B cell (primary cell): ENCODE measurements at regions of chr13 and their contacts with region 1.

Region 1: DNA sequence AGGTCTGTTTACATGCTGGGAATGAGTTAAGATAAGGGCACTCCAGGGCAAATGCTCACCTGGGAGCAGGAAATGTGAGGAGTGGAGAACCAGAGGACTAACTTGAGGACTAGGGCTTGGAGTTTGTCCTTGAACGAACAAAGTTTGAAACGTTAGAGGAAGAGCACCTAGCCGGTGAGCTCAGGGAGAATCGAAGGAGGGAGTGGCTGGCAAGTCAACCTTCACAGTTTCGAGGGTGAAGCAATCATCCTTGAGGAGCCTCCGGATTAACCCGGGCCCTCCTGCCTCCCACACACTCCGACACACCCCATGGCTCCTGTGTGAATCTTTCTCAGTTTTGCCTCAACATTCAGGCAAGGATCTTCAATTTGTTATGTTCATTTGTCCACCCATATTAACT is 58.6 kb downstream of the LMO7 start:
- DNase-seq: no peak
- ATAC-seq: no peak
- H3K4me3 ChIP-seq: no peak overlapping the region
- H3K4me3 Mint-ChIP-seq: no peak overlapping the region
- H3K27ac ChIP-seq: no peak overlapping the region
- H3K27ac Mint-ChIP-seq: no peak overlapping the region
- H3K4me1 ChIP-seq: no peaks in the 10 kb centered on the region
- H3K4me1 Mint-ChIP-seq: no peaks in the 10 kb centered on the region
- H3K27me3 ChIP-seq: no peaks in the 10 kb centered on the region
- H3K27me3 Mint-ChIP-seq: no peaks in the 10 kb centered on the region
- CTCF ChIP-seq: no peak

Region 2: GRCh38 chr13:75469047-75469446 is 225.7 kb before region 1 on chr13:
- CTCF ChIA-PET with region 1: no interaction called
- POLR2A ChIA-PET with region 1: no interaction called
- intact Hi-C with region 1: no loop called
- DNase-seq: no peak
- ATAC-seq: no peak
- H3K4me3 ChIP-seq: no peak overlapping the region
- H3K4me3 Mint-ChIP-seq: no peak overlapping the region
- H3K27ac ChIP-seq: no peak overlapping the region
- H3K27ac Mint-ChIP-seq: no peak overlapping the region
- H3K4me1 ChIP-seq: no peaks in the 10 kb centered on the region
- H3K4me1 Mint-ChIP-seq: no peaks in the 10 kb centered on the region
- H3K27me3 ChIP-seq: no peaks in the 10 kb centered on the region
- H3K27me3 Mint-ChIP-seq: peaks cover 14% of the 10 kb centered on the region
- CTCF ChIP-seq: no peak

Region 3: DNA sequence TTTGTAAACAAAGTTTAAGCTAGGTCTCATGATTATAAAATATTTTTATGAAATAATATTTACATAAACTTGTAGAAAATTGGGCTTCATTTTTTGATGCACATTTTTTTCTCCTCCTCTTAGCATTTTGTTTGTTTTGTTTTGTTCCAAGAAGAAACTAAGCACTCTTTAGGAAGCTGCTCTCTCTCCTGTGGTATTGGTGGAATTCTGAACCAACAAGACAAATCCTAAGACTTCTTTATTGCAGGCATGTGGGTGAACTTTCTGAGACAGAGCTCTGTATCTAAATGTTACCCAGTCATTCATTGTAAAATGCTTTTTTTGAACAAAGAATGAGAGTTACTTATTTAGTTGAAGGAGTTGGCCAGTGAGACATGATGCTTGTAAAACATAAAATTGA is 19.3 kb before region 1 on chr13:
- CTCF ChIA-PET with region 1: interaction called, 16 read pairs
- POLR2A ChIA-PET with region 1: no interaction called
- intact Hi-C with region 1: no loop called
- DNase-seq: no peak
- ATAC-seq: no peak
- H3K4me3 ChIP-seq: no peak overlapping the region
- H3K4me3 Mint-ChIP-seq: no peak overlapping the region
- H3K27ac ChIP-seq: no peak overlapping the region
- H3K27ac Mint-ChIP-seq: no peak overlapping the region
- H3K4me1 ChIP-seq: no peaks in the 10 kb centered on the region
- H3K4me1 Mint-ChIP-seq: no peaks in the 10 kb centered on the region
- H3K27me3 ChIP-seq: no peaks in the 10 kb centered on the region
- H3K27me3 Mint-ChIP-seq: no peaks in the 10 kb centered on the region
- CTCF ChIP-seq: no peak

Region 4: DNA sequence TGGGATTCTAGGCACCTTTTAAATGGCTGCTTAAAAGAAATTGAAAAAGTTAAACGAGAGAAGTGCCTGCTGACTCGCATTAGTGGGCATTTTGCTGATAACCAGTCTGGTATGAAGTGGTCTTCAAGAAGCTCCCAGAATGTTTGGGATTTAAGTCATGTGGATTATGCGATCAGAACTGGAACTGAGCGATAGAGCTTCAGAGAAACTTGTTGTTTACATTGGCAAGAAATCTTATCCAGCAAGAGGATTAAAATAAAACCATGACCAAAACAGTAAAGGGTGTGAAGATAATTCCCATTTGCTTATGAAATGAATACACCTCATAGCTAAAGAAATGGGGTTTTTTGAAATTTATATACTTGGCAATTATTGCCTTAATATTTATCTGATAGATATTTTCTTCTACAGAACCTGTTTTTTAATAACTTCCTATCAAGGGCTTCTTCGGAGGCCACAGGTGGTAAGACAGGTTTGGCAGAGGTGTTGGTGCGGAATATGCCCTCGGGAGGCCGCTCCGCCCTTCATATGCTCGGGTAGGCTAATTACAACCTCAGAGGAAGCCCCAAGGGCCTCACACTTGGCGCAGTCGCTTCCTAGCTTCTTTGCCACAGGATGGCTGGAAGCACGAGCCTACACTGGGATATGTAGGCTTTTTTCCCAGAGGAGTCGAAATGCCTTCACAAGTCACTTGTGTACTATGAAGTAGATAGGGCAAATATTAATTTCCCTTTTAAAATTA is 10.0 kb after region 1 on chr13:
- CTCF ChIA-PET with region 1: interaction called, 14 read pairs
- POLR2A ChIA-PET with region 1: no interaction called
- intact Hi-C with region 1: no loop called
- DNase-seq: no peak
- ATAC-seq: no peak
- H3K4me3 ChIP-seq: no peak overlapping the region
- H3K4me3 Mint-ChIP-seq: no peak overlapping the region
- H3K27ac ChIP-seq: no peak overlapping the region
- H3K27ac Mint-ChIP-seq: no peak overlapping the region
- H3K4me1 ChIP-seq: no peaks in the 10 kb centered on the region
- H3K4me1 Mint-ChIP-seq: peaks cover 2% of the 10 kb centered on the region
- H3K27me3 ChIP-seq: no peaks in the 10 kb centered on the region
- H3K27me3 Mint-ChIP-seq: no peaks in the 10 kb centered on the region
- CTCF ChIP-seq: no peak

Region 5: DNA sequence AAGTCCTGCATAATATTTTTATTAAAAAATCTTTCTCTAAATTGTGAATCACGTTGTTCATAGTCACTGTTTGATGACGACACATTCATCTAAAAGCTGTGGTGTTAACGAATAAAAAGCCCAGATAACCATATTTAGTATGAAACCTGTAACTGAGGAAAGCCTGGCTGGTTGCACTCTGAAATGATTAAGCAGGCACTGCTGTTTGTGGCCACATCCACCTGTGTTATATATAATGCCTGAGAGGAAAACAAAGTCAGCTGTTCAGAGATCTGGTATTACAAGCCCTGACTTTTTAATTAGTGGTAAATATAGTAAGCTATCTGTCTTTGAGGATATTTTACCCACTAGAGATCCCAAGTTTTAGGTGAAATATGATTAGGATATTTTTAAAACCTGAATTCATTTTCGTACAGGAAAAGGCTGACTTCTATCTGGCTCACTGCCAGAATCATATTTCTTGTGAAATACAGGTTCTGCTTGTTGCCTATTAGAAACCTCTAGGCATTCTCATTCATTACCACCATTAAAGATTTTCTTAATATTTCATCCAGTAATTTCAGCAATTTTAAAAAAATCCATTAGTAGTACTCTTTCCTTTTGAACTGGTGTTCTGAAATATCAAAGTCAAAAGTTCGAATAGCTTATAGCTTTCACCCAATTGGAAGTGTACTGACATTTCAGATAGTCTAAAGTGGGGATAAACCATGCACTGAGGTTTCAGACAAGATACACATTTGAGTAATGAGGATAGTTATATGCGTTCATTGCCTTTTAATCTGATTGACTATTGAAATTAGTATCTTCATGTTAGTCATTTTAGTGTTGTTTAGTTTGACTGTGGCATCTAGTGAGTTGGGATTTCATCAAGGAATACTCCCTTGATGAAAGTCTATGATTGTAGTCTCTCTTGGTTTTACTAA is 21.1 kb after region 1 on chr13:
- CTCF ChIA-PET with region 1: interaction called, 15 read pairs
- POLR2A ChIA-PET with region 1: no interaction called
- intact Hi-C with region 1: no loop called
- DNase-seq: no peak
- ATAC-seq: no peak
- H3K4me3 ChIP-seq: no peak overlapping the region
- H3K4me3 Mint-ChIP-seq: no peak overlapping the region
- H3K27ac ChIP-seq: no peak overlapping the region
- H3K27ac Mint-ChIP-seq: no peak overlapping the region
- H3K4me1 ChIP-seq: no peaks in the 10 kb centered on the region
- H3K4me1 Mint-ChIP-seq: no peaks in the 10 kb centered on the region
- H3K27me3 ChIP-seq: no peaks in the 10 kb centered on the region
- H3K27me3 Mint-ChIP-seq: no peaks in the 10 kb centered on the region
- CTCF ChIP-seq: no peak

Region 6: DNA sequence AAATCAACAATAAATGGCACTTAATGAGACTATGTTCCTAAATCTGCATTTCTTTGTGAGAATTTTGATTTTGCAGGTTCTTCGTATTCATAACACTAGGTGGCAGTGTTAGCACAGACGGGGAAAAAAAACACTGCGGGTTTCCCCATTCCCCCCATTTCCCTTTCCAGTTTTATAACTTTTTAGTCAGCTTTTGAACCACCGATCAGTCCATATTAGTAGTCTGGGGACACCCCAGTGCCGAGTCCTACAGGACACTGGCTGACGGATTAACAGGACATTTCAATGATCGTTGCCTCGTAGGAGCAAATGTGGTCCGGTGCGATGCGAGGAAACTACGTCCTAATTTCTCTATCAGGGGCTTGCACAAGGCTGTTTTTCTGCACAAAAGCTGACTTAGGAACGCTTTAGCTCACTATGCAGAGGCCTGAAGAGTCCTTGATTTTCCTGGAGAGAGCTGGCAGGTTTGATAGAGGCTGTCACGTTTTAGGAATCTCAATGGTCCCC is 175.7 kb after region 1 on chr13:
- CTCF ChIA-PET with region 1: interaction called, 30 read pairs
- POLR2A ChIA-PET with region 1: no interaction called
- intact Hi-C with region 1: loop called (anchors 10 kb)
- DNase-seq: peak; percentile 37
- ATAC-seq: no peak
- H3K4me3 ChIP-seq: peak overlapping the region in 1 of 5 experiments; percentile 7
- H3K4me3 Mint-ChIP-seq: peak overlapping the region; percentile 10
- H3K27ac ChIP-seq: no peak overlapping the region
- H3K27ac Mint-ChIP-seq: no peak overlapping the region
- H3K4me1 ChIP-seq: no peaks in the 10 kb centered on the region
- H3K4me1 Mint-ChIP-seq: peaks cover 3% of the 10 kb centered on the region
- H3K27me3 ChIP-seq: peaks cover 0 to 8% (median 3%) of the 10 kb centered on the region in 4 experiments
- H3K27me3 Mint-ChIP-seq: peaks cover 30% of the 10 kb centered on the region
- CTCF ChIP-seq: peak; percentile 96

Region 7: GRCh38 chr13:75993823-75994222 is 299.1 kb after region 1 on chr13:
- CTCF ChIA-PET with region 1: no interaction called
- POLR2A ChIA-PET with region 1: no interaction called
- intact Hi-C with region 1: no loop called
- DNase-seq: no peak
- ATAC-seq: no peak
- H3K4me3 ChIP-seq: no peak overlapping the region
- H3K4me3 Mint-ChIP-seq: no peak overlapping the region
- H3K27ac ChIP-seq: no peak overlapping the region
- H3K27ac Mint-ChIP-seq: no peak overlapping the region
- H3K4me1 ChIP-seq: no peaks in the 10 kb centered on the region
- H3K4me1 Mint-ChIP-seq: no peaks in the 10 kb centered on the region
- H3K27me3 ChIP-seq: no peaks in the 10 kb centered on the region
- H3K27me3 Mint-ChIP-seq: no peaks in the 10 kb centered on the region
- CTCF ChIP-seq: no peak

Region 8: GRCh38 chr13:76473552-76474134 is 778.9 kb after region 1 on chr13:
- CTCF ChIA-PET with region 1: interaction called, 17 read pairs
- POLR2A ChIA-PET with region 1: no interaction called
- intact Hi-C with region 1: no loop called
- DNase-seq: peak; percentile 68
- ATAC-seq: peak; percentile 68
- H3K4me3 ChIP-seq: no peak overlapping the region
- H3K4me3 Mint-ChIP-seq: no peak overlapping the region
- H3K27ac ChIP-seq: no peak overlapping the region
- H3K27ac Mint-ChIP-seq: no peak overlapping the region
- H3K4me1 ChIP-seq: no peaks in the 10 kb centered on the region
- H3K4me1 Mint-ChIP-seq: no peaks in the 10 kb centered on the region
- H3K27me3 ChIP-seq: no peaks in the 10 kb centered on the region
- H3K27me3 Mint-ChIP-seq: peaks cover 6% of the 10 kb centered on the region
- CTCF ChIP-seq: peak; percentile 82

Region 9: DNA sequence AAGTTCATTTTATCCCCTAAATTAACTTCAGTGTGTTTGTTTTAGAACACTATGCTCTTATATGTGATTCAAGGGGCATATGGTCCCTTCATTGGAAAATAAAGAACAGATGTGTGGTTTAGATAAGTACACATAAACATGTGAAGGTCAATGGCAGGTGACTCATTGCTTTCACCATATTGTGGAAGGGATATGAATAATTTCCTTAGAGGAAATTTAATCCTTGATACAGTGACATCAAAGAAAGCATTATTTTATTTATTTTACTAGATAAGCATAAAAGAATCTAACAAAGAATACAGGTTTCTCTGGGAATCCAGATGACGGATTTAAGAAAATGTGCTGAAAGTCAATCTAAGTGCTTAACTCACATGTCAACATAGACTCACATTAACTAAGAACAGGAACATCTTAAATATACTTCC is 818.0 kb after region 1 on chr13:
- CTCF ChIA-PET with region 1: no interaction called
- POLR2A ChIA-PET with region 1: no interaction called
- intact Hi-C with region 1: no loop called
- DNase-seq: no peak
- ATAC-seq: no peak
- H3K4me3 ChIP-seq: no peak overlapping the region
- H3K4me3 Mint-ChIP-seq: no peak overlapping the region
- H3K27ac ChIP-seq: no peak overlapping the region
- H3K27ac Mint-ChIP-seq: no peak overlapping the region
- H3K4me1 ChIP-seq: no peaks in the 10 kb centered on the region
- H3K4me1 Mint-ChIP-seq: no peaks in the 10 kb centered on the region
- H3K27me3 ChIP-seq: peaks cover 0 to 4% (median 0%) of the 10 kb centered on the region in 4 experiments
- H3K27me3 Mint-ChIP-seq: peaks cover 11% of the 10 kb centered on the region
- CTCF ChIP-seq: no peak

Region 10: GRCh38 chr13:76903544-76904162 is 1208.9 kb after region 1 on chr13:
- CTCF ChIA-PET with region 1: interaction called, 54 read pairs
- POLR2A ChIA-PET with region 1: no interaction called
- intact Hi-C with region 1: loop called (anchors 1 kb)
- DNase-seq: peak; percentile 76
- ATAC-seq: peak; percentile 85
- H3K4me3 ChIP-seq: no peak overlapping the region
- H3K4me3 Mint-ChIP-seq: no peak overlapping the region
- H3K27ac ChIP-seq: no peak overlapping the region
- H3K27ac Mint-ChIP-seq: no peak overlapping the region
- H3K4me1 ChIP-seq: no peaks in the 10 kb centered on the region
- H3K4me1 Mint-ChIP-seq: no peaks in the 10 kb centered on the region
- H3K27me3 ChIP-seq: peaks cover 0 to 9% (median 0%) of the 10 kb centered on the region in 4 experiments
- H3K27me3 Mint-ChIP-seq: peaks cover 24% of the 10 kb centered on the region
- CTCF ChIP-seq: peak; percentile 100

Region 11: GRCh38 chr13:77300176-77301037 is 1605.7 kb after region 1 on chr13:
- CTCF ChIA-PET with region 1: no interaction called
- POLR2A ChIA-PET with region 1: no interaction called
- intact Hi-C with region 1: no loop called
- DNase-seq: peak; percentile 59
- ATAC-seq: peak; percentile 31
- H3K4me3 ChIP-seq: peak overlapping the region in 2 of 5 experiments; percentile 1 to 25
- H3K4me3 Mint-ChIP-seq: peak overlapping the region; percentile 74
- H3K27ac ChIP-seq: peak overlapping the region; percentile 61 to 75
- H3K27ac Mint-ChIP-seq: peak overlapping the region; percentile 87
- H3K4me1 ChIP-seq: peaks cover 45 to 77% of the 10 kb centered on the region in 2 donors
- H3K4me1 Mint-ChIP-seq: peaks cover 77% of the 10 kb centered on the region
- H3K27me3 ChIP-seq: no peaks in the 10 kb centered on the region
- H3K27me3 Mint-ChIP-seq: no peaks in the 10 kb centered on the region
- CTCF ChIP-seq: no peak